Activated CD4-positive, alpha-beta T cell treated with anti-CD3 and anti-CD28 coated beads, Interleukin-2, amount 10 ng/mL, durations not matched to agents 24 days and 14 days (primary cell): ENCODE measurements at regions of chr5 and their contacts with region 1.

Region 1: DNA sequence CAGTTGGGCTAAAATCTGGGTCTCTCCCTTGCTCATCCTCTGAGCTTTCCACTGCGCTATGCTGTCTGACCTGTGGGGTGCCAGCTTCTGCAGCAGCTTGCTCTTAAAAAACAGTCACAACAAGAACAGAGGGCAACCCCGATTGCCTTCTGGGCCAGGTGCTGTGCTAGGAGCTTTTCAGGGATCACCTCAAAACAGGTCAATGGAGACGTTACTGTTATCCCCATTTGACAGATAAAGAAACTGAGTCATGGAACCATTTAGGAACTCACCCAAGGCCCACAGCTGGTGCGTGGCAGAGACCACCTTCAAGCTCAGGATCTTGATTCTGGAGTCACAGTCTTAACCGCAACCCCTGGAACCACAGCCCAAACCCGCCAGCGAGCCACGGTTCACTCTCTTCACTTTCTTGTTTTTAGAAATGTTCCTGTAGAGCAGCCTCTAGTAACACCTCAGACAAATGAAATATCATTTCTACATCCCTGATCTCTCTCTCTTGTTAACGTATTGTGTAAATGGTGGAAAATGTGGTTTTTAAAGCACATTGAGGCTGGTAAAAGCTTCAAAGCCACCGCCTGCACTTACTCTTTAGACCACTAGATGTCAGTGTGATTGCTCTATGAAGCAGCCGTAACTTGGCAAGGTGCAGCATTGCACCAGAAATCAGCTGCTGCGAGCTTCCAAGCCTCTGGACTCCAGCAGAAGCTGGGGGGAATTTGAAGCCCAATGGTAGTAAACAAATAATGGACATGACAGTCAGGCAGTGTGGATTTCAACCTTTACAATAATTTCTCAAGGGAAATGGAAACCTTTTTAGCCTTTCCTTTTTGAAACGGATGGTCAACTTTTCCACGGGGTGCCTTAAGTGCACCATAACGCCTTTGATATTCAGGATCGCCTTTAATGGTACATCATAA is 1.7 kb downstream of the FYB1 start:
- DNase-seq: peak; percentile 94
- H3K4me3 Mint-ChIP-seq: peak overlapping the region; percentile 89
- H3K27ac Mint-ChIP-seq: peak overlapping the region; percentile 95
- H3K4me1 Mint-ChIP-seq: peaks cover 48% of the 10 kb centered on the region
- H3K27me3 Mint-ChIP-seq: no peaks in the 10 kb centered on the region

Region 2: GRCh38 chr5:39148983-39149534 is 68.6 kb before region 1 on chr5:
- intact Hi-C with region 1: loop called (anchors 1 kb)
- DNase-seq: no peak
- H3K4me3 Mint-ChIP-seq: no peak overlapping the region
- H3K27ac Mint-ChIP-seq: peak overlapping the region; percentile 68
- H3K4me1 Mint-ChIP-seq: peaks cover 43% of the 10 kb centered on the region
- H3K27me3 Mint-ChIP-seq: no peaks in the 10 kb centered on the region

Region 3: GRCh38 chr5:39256477-39257235 is 39.0 kb after region 1 on chr5:
- intact Hi-C with region 1: loop called (anchors 1 kb)
- DNase-seq: peak; percentile 73
- H3K4me3 Mint-ChIP-seq: peak overlapping the region; percentile 43
- H3K27ac Mint-ChIP-seq: no peak overlapping the region
- H3K4me1 Mint-ChIP-seq: peaks cover 18% of the 10 kb centered on the region
- H3K27me3 Mint-ChIP-seq: no peaks in the 10 kb centered on the region

Region 4: GRCh38 chr5:39283231-39283818 is 65.7 kb after region 1 on chr5:
- intact Hi-C with region 1: loop called (anchors 1 kb)
- DNase-seq: peak; percentile 90
- H3K4me3 Mint-ChIP-seq: no peak overlapping the region
- H3K27ac Mint-ChIP-seq: peak overlapping the region; percentile 62
- H3K4me1 Mint-ChIP-seq: peaks cover 14% of the 10 kb centered on the region
- H3K27me3 Mint-ChIP-seq: peaks cover 11% of the 10 kb centered on the region

Region 5: DNA sequence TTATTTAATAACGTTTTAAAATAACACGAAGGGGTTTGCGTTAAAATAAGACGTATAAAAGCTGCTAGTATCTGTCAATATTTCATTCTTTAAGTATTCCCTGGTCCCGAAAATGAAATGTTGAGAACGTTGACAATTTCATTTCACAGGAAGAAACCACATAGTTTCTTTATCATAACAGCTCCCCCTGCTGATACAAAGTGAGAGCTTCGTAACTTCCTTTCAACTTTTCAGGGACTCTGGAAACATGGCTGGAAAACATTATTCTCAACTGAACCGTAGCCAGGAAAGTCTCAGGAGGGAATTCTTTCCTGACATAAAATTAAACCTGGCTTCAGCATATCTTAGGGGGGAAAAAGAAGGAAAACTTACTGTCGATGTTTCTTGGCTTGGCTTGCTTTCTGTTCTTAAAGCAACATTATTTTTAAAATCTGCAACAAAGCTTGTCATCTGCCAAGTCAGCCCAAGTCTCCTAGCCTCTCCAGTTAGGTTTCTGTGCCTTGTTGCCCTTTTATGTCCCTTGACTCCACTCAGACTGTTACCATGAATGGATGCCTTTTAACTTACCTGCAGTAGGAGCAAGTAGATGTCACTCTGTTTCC is 330.0 kb after region 1 on chr5:
- intact Hi-C with region 1: loop called (anchors 1 kb)
- DNase-seq: peak; percentile 73
- H3K4me3 Mint-ChIP-seq: no peak overlapping the region
- H3K27ac Mint-ChIP-seq: no peak overlapping the region
- H3K4me1 Mint-ChIP-seq: peaks cover 2% of the 10 kb centered on the region
- H3K27me3 Mint-ChIP-seq: peaks cover 17% of the 10 kb centered on the region